ENCODE measurements at regions of chr16 and their contacts with region 1.

Region 1: DNA sequence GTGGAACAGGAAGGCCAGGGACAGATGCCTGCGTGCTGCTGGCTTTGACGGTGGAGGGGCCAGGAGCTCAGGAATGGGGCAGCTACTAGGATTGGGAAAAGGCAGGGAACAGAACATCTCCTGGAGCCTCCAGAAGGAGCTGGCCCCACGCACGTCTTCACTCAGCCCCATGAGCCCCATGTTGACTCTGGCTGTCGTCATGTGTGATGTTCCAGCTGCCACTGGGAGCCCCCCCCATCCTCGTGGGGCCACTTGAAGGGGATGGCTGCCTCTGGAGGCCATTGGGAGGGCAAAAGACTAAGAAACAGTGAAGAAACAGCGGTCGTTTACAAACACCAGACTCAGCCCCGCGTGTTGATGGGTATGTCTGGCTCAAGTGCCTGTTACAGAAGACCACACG is 18.5 kb upstream of the APRT start:
- DNase-seq: no peak
- H3K4me3 ChIP-seq: no peak overlapping the region
- H3K27ac ChIP-seq: no peak overlapping the region
- H3K4me1 ChIP-seq: no peaks in the 10 kb centered on the region
- H3K27me3 ChIP-seq: no peaks in the 10 kb centered on the region
- CTCF ChIP-seq: no peak

Region 2: DNA sequence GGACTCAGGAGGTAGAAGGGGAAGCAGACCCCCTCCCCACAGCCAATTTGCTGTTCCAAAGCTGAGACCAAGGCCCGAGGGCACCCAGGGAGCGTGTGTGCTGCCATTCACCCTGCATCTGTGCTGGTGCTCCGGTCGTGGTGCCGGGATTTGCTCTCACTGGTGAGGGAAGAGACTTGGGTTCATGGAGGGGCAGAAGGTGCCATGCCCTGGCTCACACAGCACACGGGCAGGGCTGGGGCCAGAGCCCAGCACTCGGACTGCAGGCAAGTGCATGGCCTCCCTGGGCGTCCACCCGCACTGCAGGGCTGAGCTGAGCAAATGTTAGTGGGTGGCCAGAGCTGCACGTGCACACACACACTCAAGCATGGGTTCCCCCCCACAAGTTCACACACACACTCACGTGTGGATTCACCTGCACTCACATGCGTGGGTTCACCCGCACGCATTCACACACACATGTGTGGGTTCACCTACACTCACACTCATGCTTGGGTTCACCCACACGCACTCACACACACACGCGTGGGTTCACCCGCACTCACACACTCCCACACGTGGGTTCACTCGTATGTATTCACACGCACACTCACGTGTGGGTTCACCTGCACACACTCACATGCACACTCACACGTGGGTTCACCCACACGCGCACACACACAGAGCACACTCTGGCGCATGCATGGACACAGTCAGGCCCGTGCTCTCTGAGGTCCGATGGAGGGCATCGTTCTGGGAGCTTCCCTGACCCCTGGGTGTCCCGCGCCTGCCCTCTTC is 203.7 kb after region 1 on chr16:
- CTCF ChIA-PET with region 1: interaction called, 12 read pairs
- POLR2A ChIA-PET with region 1: no interaction called
- intact Hi-C with region 1: no loop called
- DNase-seq: no peak
- H3K4me3 ChIP-seq: no peak overlapping the region
- H3K27ac ChIP-seq: no peak overlapping the region
- H3K4me1 ChIP-seq: no peaks in the 10 kb centered on the region
- H3K27me3 ChIP-seq: peaks cover 62% of the 10 kb centered on the region
- CTCF ChIP-seq: no peak

Region 3: GRCh38 chr16:89289428-89290395 is 459.5 kb after region 1 on chr16:
- CTCF ChIA-PET with region 1: no interaction called
- POLR2A ChIA-PET with region 1: no interaction called
- intact Hi-C with region 1: no loop called
- DNase-seq: peak; percentile 76
- H3K4me3 ChIP-seq: no peak overlapping the region
- H3K27ac ChIP-seq: no peak overlapping the region
- H3K4me1 ChIP-seq: no peaks in the 10 kb centered on the region
- H3K27me3 ChIP-seq: no peaks in the 10 kb centered on the region
- CTCF ChIP-seq: peak; percentile 81

Measured in A673 (cell line).